Right lobe of liver (tissue), 6 donors: ENCODE measurements at regions of chr15 and their contacts with region 1.

Region 1: DNA sequence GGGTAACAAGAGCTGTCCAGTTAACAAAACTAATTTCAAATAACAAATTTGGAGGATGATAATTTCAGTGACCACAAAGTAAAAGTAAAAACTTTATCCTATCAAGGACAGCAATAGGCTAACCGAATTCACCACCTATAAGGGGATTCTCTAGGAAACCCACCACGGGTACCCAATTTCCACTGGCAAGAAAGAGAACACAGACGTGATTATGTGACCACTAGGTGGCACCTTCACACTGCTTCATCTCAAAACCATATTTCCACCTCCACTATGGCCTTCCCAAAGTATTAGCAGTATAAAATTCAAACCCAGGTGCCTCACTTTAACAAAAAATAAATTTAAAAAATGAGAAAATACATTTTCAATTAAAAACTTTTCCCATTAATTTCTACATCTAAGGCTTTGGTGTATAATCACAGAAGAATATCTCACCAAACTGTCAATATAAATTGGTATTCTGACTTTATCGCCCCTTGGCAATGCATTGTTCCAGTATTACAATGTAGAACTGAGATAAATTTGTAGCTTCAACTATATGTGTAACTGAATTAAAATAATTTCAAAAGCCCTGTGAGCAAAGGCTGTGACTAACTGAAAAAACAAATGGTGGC is 96.5 kb downstream of the FSIP1 start:
- DNase-seq: no peak
- ATAC-seq: peak; percentile 71 to 82 (median 76)
- H3K4me3 ChIP-seq: no peak overlapping the region
- H3K27ac ChIP-seq: no peak overlapping the region
- H3K4me1 ChIP-seq: no peaks in the 10 kb centered on the region
- H3K27me3 ChIP-seq: no peaks in the 10 kb centered on the region
- CTCF ChIP-seq: peak; percentile 73 to 84 (median 78)
- POLR2A ChIP-seq: no peak

Region 2: GRCh38 chr15:39756806-39757522 is 70.9 kb after region 1 on chr15:
- intact Hi-C with region 1: loop called in 1 of 2 experiments (anchors 10 kb)
- DNase-seq: no peak
- ATAC-seq: peak in 2 of 4 donors; percentile 38 to 43
- H3K4me3 ChIP-seq: no peak overlapping the region
- H3K27ac ChIP-seq: no peak overlapping the region
- H3K4me1 ChIP-seq: no peaks in the 10 kb centered on the region
- H3K27me3 ChIP-seq: no peaks in the 10 kb centered on the region
- CTCF ChIP-seq: peak; percentile 65 to 91 (median 88)
- POLR2A ChIP-seq: no peak